ENCODE measurements at regions of chr5 and their contacts with region 1.

Region 1: DNA sequence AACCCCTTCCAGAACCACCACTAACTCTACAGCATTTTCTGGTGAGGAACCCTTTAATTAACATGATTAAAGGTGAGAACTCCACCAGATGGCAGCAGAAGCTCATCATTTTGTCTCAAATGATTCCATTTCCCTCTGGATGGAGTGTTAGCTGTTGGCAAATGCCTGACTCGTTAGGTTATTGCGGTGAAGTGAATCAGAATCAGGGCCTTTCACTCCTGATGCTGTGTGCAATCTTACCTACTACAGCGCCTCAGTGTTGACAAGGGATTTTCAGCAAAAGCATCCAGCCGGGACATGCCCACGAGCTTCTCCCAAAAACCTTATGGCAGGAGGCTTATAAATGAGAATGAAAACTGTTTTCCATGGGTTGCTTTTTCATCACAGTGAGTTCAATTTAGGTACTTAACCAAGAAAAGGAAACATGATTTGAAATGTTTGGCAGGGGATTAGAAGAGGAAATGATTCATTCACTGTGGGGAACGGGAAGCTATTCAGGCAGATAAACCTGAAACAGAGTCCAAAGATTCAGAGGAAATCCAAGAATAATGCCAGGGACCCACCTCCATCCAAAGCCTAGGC is 48.0 kb upstream of the CAST start:
- DNase-seq: peak in 1 of 2 donors; percentile 71
- H3K4me3 ChIP-seq: no peak overlapping the region
- CTCF ChIP-seq: no peak
- POLR2A ChIP-seq: no peak

Region 2: GRCh38 chr5:96687812-96688453 is 73.7 kb after region 1 on chr5:
- intact Hi-C with region 1: loop called (anchors 5 kb)
- DNase-seq: no peak
- H3K4me3 ChIP-seq: no peak overlapping the region
- CTCF ChIP-seq: no peak
- POLR2A ChIP-seq: no peak